ENCODE measurements at regions of chr19 and their contacts with region 1.

Region 1: DNA sequence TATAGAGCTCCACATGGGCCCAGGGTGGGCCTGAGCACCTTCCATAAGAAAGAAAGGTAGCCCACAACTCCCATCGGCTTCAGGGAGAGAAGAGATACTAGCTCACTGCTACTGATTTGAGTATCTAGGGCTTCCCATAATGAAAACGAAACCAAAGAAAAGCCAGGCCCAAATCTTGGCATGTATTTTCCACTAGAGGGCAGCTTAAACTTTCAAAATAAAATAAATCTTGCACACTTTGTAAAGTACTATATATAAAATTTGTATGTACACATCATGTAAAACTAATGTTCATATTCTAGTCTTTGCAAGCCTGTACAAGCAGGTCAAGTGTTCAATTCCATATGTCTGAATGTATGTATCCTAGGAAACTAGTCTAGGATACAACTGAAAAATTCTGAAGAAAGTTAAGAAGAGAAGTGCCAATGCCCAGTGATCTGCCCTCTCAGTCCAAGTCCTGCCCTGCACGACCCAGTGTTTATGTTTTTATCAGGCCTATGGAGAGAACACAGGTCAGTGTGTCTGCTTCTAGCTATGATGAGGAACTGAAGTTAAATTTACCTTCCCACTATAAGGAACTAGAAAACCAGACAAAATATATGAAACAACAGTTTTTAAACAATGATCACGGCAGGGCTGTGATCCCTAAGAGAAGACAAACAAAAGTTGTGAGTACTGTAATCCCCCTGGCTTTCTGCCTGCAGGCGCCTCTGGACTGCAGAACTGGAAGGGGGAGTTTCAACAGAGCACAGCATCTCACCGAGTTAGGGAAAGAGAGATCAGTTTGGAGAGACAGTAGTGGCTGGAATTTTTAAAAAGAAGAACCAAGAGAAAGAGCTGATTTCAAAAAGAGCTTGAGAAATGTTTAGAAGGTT is 475.7 kb downstream of the UQCRFS1 start:
- DNase-seq: no peak
- ATAC-seq: peak; percentile 53
- H3K4me3 Mint-ChIP-seq: no peak overlapping the region
- H3K27ac Mint-ChIP-seq: peak overlapping the region; percentile 60
- H3K4me1 Mint-ChIP-seq: peaks cover 3% of the 10 kb centered on the region
- H3K27me3 Mint-ChIP-seq: no peaks in the 10 kb centered on the region

Region 2: DNA sequence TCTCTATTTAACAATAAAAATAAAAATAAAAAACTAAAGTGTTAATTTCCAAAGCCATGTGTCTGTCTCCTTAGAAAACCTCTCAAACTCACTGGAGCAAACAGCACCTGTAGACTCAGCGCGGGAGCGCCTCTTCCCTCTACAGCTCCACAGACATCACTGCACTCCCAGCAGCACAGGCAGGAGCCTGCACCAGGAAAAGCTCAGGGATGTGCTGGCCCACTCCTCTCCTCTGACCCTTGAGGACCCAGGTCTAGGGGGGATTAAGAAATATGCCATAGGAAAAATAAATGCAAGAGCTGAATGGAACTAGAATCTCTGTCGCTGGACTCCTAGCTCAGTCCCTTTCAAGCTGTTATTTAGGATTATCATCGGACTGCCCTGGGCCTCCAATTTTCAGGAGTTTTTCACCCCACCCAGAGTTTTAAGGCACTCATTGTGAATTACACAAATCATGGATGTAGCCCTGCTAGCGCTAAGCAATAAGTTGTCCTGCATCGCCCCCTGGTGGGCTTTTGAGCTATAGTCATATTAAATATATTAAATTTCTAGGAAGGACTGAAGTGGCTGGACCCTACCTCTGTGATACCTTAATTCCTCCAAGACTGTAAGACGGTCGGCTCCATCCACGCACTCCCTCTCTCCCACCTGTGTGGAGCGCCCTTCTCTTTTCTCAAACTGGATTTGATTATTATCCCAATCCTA is 141.8 kb after region 1 on chr19:
- CTCF ChIA-PET with region 1: interaction called, 30 read pairs
- DNase-seq: peak; percentile 68
- ATAC-seq: no peak
- H3K4me3 Mint-ChIP-seq: no peak overlapping the region
- H3K27ac Mint-ChIP-seq: no peak overlapping the region
- H3K4me1 Mint-ChIP-seq: no peaks in the 10 kb centered on the region
- H3K27me3 Mint-ChIP-seq: no peaks in the 10 kb centered on the region

Measured in activated CD8-positive, alpha-beta memory T cell treated with anti-CD3 and anti-CD28 coated beads, Interleukin-2, amount 10 ng/mL, durations not matched to agents 7 days and 5 days (primary cell).